ENCODE measurements at regions of chr2 and their contacts with region 1.

Region 1: DNA sequence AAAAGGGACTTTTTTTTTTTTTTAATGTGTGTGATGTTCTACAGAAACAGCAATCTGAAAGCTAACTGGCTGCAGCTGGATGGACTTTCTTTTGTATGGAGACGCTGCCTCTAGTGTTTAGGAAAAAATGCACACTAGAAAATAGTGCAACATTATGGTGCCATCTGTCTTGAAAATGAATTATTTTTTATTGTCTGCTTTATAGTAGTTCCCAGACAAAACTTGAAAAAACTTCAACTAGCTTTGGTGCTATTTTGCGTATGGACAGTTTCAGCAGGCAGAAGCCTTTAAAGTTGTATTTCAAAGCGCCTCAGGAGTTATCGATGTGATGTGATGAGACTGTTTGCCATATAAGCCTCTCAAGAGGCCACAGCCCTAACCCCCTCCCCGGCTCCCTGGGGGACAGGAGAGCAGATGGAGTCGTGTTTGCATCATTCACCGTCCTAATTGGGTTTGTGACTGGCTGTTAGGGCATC is 86.9 kb downstream of the LTBP1 start:
- DNase-seq: peak; percentile 67
- H3K4me3 ChIP-seq: no peak overlapping the region
- H3K27ac ChIP-seq: no peak overlapping the region
- H3K4me1 ChIP-seq: peaks cover 15% of the 10 kb centered on the region
- H3K27me3 ChIP-seq: no peaks in the 10 kb centered on the region
- CTCF ChIP-seq: peak; percentile 13 to 46
- POLR2A ChIP-seq: no peak

Region 2: DNA sequence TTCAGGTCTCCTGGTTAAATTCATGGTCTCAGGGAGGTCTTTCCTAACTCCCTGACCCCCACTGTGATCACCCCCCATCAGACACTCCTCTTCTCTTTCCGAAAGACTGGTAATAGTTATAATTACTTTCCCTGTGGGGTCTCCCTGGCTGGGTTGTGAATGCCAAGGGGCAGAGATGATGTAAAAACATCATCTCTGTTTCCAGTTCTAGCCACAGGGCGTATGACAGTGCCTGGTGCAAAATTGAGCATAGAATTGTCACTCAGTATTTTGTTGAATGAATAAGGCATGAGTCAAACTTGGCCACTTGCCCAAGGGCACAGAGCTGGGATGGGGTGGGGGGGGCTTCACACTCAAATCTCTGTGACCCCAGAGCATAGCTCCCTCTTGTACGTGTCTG is 21.7 kb before region 1 on chr2:
- CTCF ChIA-PET with region 1: no interaction called
- POLR2A ChIA-PET with region 1: no interaction called
- dilution Hi-C with region 1: no loop called
- intact Hi-C with region 1: no loop called
- DNase-seq: no peak
- H3K4me3 ChIP-seq: no peak overlapping the region
- H3K27ac ChIP-seq: no peak overlapping the region
- H3K4me1 ChIP-seq: peaks cover 19% of the 10 kb centered on the region
- H3K27me3 ChIP-seq: no peaks in the 10 kb centered on the region
- CTCF ChIP-seq: no peak
- POLR2A ChIP-seq: no peak

Region 3: GRCh38 chr2:33380001-33380609 is 346.5 kb after region 1 on chr2:
- CTCF ChIA-PET with region 1: interaction called, 19 read pairs
- POLR2A ChIA-PET with region 1: no interaction called
- dilution Hi-C with region 1: no loop called
- intact Hi-C with region 1: no loop called
- DNase-seq: no peak
- H3K4me3 ChIP-seq: no peak overlapping the region
- H3K27ac ChIP-seq: no peak overlapping the region
- H3K4me1 ChIP-seq: peaks cover 3% of the 10 kb centered on the region
- H3K27me3 ChIP-seq: no peaks in the 10 kb centered on the region
- CTCF ChIP-seq: peak; percentile 44 to 58
- POLR2A ChIP-seq: no peak

Region 4: DNA sequence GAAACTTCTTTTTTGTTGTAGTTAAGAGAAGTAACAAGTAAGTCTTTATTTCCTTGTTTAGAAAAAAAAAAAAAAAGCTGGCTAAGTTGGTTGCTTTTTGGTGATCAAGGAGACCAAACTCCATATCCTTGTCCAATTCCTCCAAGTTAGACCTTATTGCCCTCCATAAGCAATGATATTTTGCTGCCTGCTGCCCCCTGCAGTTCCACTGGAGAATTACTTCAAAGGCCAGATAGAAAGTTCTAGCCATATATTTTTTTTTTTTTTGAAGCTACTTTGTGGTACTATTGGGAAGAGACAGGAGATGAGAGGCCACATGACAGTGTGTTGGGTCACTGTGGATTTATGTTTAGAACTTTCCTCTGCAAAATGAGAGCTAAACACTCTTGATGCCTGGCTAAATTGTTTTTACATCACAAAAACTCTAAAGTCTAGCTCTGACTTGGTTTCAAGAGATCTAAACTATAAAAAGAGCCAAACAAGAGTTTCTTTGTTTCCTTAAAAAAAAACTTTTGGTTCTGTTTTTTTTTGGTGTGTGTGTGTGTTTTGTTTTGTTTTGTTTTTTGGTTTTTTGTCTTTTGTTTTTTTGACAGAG is 362.1 kb after region 1 on chr2:
- CTCF ChIA-PET with region 1: interaction called, 14 read pairs
- POLR2A ChIA-PET with region 1: no interaction called
- dilution Hi-C with region 1: no loop called
- intact Hi-C with region 1: no loop called
- DNase-seq: peak; percentile 76
- H3K4me3 ChIP-seq: no peak overlapping the region
- H3K27ac ChIP-seq: no peak overlapping the region
- H3K4me1 ChIP-seq: no peaks in the 10 kb centered on the region
- H3K27me3 ChIP-seq: no peaks in the 10 kb centered on the region
- CTCF ChIP-seq: peak; percentile 56 to 58
- POLR2A ChIP-seq: no peak

Measured in endothelial cell of umbilical vein (primary cell).